Activated CD4-positive, alpha-beta T cell treated with anti-CD3 and anti-CD28 coated beads for 36 hours (primary cell): ENCODE measurements at regions of chr12 and their contacts with region 1.

Region 1: GRCh38 chr12:56359851-56360767 is at the start of gene STAT2:
- DNase-seq: peak; percentile 99
- ATAC-seq: peak; percentile 97
- H3K4me3 Mint-ChIP-seq: peak within 1 kb of the TSS; percentile 86
- H3K27ac Mint-ChIP-seq: peak within 1 kb of the TSS; percentile 95
- H3K4me1 Mint-ChIP-seq: peaks cover 23% of the 10 kb centered on the region
- H3K27me3 Mint-ChIP-seq: no peaks in the 10 kb centered on the region
- total RNA-seq, gene STAT2: 116 to 124 TPM

Region 2: DNA sequence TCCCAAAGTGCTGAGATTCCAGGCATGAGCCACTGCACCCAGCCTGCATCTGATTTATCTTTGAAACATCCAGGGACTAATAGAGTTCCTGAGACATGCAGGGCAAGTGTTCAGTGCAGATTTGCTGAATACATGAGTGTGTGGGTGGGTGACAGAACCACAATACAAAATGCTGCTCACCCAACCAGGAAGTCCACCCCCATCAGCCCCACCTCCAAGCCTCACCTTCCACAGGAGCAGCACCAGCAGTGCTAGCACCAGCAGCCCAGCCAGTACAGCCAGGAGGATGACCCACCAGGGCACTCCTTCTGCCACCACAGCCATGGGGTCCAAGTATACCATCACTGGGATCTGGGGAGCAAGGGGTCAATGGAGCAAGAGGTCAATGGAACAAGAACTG is 672.4 kb before region 1 on chr12:
- CTCF ChIA-PET with region 1: no interaction called
- POLR2A ChIA-PET with region 1: no interaction called
- intact Hi-C with region 1: no loop called
- DNase-seq: peak; percentile 68
- ATAC-seq: peak; percentile 96
- H3K4me3 Mint-ChIP-seq: no peak overlapping the region
- H3K27ac Mint-ChIP-seq: no peak overlapping the region
- H3K4me1 Mint-ChIP-seq: peaks cover 7% of the 10 kb centered on the region
- H3K27me3 Mint-ChIP-seq: peaks cover 4% of the 10 kb centered on the region

Region 3: DNA sequence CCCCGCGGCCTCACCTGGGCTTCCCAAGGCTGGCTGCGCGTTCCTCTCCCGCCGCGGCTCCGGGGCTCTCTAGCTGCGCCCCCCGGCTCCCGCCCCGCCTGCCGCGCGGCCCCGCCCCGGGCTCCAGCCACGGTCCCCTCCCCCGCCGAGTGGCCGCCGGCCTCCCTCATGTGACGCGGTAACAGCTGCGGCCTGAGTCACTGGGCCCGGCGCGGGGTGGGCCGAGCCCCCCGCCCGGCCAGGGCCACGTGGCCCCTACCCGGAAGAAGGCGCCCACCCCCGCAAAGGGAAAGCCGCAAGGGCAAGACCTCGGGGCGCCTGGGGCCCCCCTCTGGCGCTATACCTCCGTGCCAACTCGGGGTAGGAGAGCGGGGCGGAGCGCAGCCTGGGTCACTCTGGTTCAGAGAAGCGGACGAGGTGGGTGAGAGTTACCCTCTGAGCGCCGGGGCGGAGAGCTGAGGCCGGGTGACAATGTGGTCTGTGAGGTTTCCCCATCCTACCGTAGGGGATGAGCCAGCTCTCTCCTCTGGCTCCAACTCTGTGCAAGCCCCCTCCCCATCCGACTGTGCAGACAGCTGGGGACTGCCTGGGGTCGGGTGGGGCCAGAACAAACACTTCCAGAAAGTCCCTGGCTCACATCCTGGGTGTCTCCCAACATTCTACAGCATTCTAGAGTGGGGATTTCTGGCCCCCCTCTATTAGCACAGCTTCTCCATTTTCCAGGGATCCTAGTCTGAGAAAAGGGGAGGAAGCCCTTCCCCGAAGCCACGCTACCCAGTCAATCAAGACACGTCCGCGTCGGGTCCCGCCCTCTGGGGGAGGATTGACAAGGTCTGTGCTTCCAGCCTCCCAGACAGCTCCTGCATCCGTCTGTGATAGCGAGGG is 630.9 kb before region 1 on chr12 and contains the start of gene CD63:
- CTCF ChIA-PET with region 1: no interaction called
- POLR2A ChIA-PET with region 1: no interaction called
- intact Hi-C with region 1: no loop called
- DNase-seq: peak; percentile 89
- ATAC-seq: peak; percentile 73
- H3K4me3 Mint-ChIP-seq: peak within 1 kb of the TSS; percentile 93
- H3K27ac Mint-ChIP-seq: peak within 1 kb of the TSS; percentile 95
- H3K4me1 Mint-ChIP-seq: peaks cover 34% of the 10 kb centered on the region
- H3K27me3 Mint-ChIP-seq: no peaks in the 10 kb centered on the region
- total RNA-seq, gene CD63: 113 to 122 TPM

Region 4: GRCh38 chr12:56041552-56042429 is 318.3 kb before region 1 on chr12 and contains the start of gene RPS26:
- CTCF ChIA-PET with region 1: no interaction called
- POLR2A ChIA-PET with region 1: no interaction called
- intact Hi-C with region 1: loop called in 1 of 2 experiments (anchors 1 kb)
- DNase-seq: peak; percentile 97
- ATAC-seq: peak; percentile 92
- H3K4me3 Mint-ChIP-seq: peak within 1 kb of the TSS; percentile 91
- H3K27ac Mint-ChIP-seq: peak within 1 kb of the TSS; percentile 99
- H3K4me1 Mint-ChIP-seq: peaks cover 61% of the 10 kb centered on the region
- H3K27me3 Mint-ChIP-seq: no peaks in the 10 kb centered on the region
- total RNA-seq, gene RPS26: 33.9 to 64.0 TPM

Region 5: GRCh38 chr12:56258057-56258819 is 101.9 kb before region 1 on chr12 and contains the start of gene ANKRD52:
- CTCF ChIA-PET with region 1: interaction called, 3 read pairs
- POLR2A ChIA-PET with region 1: no interaction called
- intact Hi-C with region 1: loop called in 1 of 2 experiments (anchors 1 kb)
- DNase-seq: peak; percentile 90
- ATAC-seq: peak; percentile 92
- H3K4me3 Mint-ChIP-seq: peak within 1 kb of the TSS; percentile 83
- H3K27ac Mint-ChIP-seq: peak within 1 kb of the TSS; percentile 72
- H3K4me1 Mint-ChIP-seq: peaks cover 16% of the 10 kb centered on the region
- H3K27me3 Mint-ChIP-seq: no peaks in the 10 kb centered on the region
- total RNA-seq, gene ANKRD52: 29.2 to 31.0 TPM

Region 6: GRCh38 chr12:56333679-56334489 is 26.2 kb before region 1 on chr12 and contains the start of gene PAN2:
- CTCF ChIA-PET with region 1: interaction called, 14 read pairs
- POLR2A ChIA-PET with region 1: interaction called, 27 read pairs
- intact Hi-C with region 1: loop called (anchors 1 kb)
- DNase-seq: peak; percentile 96
- ATAC-seq: peak; percentile 88
- H3K4me3 Mint-ChIP-seq: peak within 1 kb of the TSS; percentile 83
- H3K27ac Mint-ChIP-seq: peak within 1 kb of the TSS; percentile 99
- H3K4me1 Mint-ChIP-seq: peaks cover 37% of the 10 kb centered on the region
- H3K27me3 Mint-ChIP-seq: no peaks in the 10 kb centered on the region
- total RNA-seq, gene PAN2: 54.6 to 62.5 TPM

Region 7: DNA sequence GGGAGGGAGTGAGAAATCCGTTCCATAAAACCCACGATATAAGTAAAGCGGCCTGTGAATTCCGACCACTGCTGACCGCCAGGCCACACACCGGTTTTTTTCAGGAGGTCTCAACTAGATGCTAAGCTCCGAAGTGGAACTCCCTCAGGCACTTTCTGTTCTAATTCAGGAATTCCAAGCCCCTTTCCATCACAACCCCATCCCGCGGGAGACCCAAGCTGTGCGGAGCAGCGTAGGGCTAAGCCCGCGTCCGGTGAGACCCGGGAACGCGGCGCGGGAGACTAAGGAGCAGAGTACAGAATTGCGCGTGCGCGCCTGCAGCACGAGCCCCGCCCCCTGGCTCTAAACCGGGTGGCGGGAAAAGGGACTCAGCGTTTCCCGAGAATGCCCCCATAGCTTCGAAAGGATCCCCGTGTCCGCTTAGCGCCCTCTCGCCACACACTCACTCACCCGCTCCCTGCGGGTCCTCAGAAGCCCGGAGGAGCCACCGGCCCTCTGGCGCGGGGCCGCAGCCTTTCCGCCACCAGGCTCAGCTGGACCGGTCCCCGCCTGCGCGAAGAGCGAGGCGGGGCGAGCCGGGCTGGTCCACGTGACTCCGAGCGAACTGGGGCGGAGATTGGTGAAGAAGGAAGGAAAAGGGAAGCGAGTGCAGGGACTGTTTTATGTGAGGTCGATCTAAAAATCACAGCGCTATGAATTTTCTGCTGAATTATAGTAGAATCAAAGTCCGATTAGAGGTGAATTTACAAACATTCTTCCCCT is 88.9 kb after region 1 on chr12 and contains the start of gene TIMELESS:
- CTCF ChIA-PET with region 1: interaction called, 4 read pairs
- POLR2A ChIA-PET with region 1: interaction called, 9 read pairs
- intact Hi-C with region 1: loop called (anchors 1 kb)
- DNase-seq: peak; percentile 92
- ATAC-seq: peak; percentile 97
- H3K4me3 Mint-ChIP-seq: peak within 1 kb of the TSS; percentile 81
- H3K27ac Mint-ChIP-seq: peak within 1 kb of the TSS; percentile 97
- H3K4me1 Mint-ChIP-seq: peaks cover 19% of the 10 kb centered on the region
- H3K27me3 Mint-ChIP-seq: no peaks in the 10 kb centered on the region
- total RNA-seq, gene TIMELESS: 46.3 to 47.3 TPM